ENCODE measurements at regions of chr12 and their contacts with region 1.

Region 1: DNA sequence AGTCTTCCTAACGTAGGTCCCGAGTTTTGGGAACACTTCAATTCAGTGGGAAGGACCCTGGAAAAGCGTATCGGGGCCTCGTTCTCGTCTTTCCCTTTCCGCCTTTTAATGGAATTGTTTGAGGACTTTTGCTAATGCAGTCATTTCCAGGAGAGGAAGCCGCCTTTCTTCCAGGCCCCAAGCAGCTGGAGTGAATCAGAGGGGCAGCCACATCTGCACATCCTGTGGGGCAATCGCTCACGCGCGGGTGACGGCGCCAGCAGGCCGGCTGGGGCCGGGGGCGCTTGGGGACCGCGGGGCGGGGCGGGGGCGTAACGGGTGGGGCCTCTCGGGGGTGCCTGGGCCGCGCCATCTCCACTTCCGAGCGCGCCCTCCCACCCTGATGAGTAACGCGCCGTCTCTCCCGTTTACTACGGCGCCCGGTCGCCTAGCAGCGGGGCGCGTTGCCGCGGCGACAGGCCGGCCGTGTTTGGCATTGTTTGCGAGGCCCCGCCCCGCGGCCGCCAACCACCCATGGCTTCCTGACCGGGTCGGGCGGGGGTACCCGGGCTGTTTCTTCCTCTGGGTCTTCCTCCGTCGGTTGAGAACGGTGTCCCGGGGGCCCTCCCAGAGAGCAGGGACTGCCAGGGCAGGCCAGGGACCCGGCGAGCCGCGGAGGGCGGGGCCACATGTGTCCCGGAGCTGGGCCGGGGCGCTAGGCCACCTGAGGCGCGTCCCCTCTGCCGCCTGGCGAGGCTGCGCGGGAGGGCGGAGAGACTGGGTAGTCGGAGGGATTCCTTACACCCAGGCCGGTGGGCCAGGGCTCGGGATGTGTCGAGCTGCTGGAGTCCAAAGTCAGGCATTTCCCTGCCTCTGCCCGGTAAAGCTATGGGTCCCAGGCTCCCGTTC is 2.3 kb downstream of the GSG1 start:
- DNase-seq: peak; percentile 98
- H3K4me3 Mint-ChIP-seq: peak overlapping the region; percentile 77
- H3K27ac Mint-ChIP-seq: peak overlapping the region; percentile 89
- H3K4me1 Mint-ChIP-seq: peaks cover 45% of the 10 kb centered on the region
- H3K27me3 Mint-ChIP-seq: peaks cover 3% of the 10 kb centered on the region

Region 2: GRCh38 chr12:11695321-11695720 is 1405.8 kb before region 1 on chr12:
- intact Hi-C with region 1: no loop called
- DNase-seq: no peak
- H3K4me3 Mint-ChIP-seq: no peak overlapping the region
- H3K27ac Mint-ChIP-seq: no peak overlapping the region
- H3K4me1 Mint-ChIP-seq: peaks cover 50% of the 10 kb centered on the region
- H3K27me3 Mint-ChIP-seq: no peaks in the 10 kb centered on the region

Region 3: DNA sequence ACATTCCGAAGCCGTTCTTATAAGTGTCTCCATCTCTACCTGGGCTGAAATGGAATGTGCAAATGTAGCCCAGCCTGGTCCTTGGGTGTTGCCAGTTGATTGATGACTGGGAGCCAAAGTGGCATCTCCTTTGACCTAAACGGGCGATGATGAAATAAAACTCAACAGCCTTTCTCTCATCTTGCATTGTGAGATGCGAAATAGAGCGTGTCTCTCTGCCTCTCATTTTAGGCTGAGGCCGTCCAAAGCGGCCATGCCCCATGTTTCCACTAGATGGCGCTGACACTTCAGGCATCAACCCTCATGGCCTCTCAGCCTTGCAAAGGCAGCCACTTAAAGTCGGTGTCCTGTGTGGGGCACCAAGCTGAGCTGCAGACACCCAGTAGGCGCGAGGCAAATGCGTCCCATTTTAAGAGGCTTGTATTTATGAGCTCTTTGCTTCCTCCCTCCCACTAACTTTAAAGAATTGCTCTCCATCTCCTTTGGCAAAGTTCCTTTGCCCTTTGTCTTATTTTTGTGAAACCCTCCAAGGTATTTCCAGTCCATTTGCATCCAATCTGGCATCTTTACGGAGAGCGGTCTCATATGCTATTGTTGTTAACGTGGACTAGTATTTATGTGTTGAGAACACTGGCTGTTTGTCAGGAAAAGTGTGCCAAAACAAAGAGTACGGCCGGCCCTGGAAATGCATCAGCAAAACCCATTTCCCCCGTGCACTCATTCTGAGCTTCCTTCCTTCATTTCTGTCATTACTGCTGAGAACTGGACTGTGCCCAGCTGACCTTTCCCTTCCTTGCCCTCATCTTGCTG is 184.8 kb before region 1 on chr12:
- intact Hi-C with region 1: loop called (anchors 1 kb)
- DNase-seq: peak; percentile 96
- H3K4me3 Mint-ChIP-seq: no peak overlapping the region
- H3K27ac Mint-ChIP-seq: no peak overlapping the region
- H3K4me1 Mint-ChIP-seq: peaks cover 3% of the 10 kb centered on the region
- H3K27me3 Mint-ChIP-seq: peaks cover 10% of the 10 kb centered on the region

Region 4: GRCh38 chr12:12975322-12976077 is 125.6 kb before region 1 on chr12:
- intact Hi-C with region 1: no loop called
- DNase-seq: no peak
- H3K4me3 Mint-ChIP-seq: no peak overlapping the region
- H3K27ac Mint-ChIP-seq: no peak overlapping the region
- H3K4me1 Mint-ChIP-seq: no peaks in the 10 kb centered on the region
- H3K27me3 Mint-ChIP-seq: no peaks in the 10 kb centered on the region

Region 5: DNA sequence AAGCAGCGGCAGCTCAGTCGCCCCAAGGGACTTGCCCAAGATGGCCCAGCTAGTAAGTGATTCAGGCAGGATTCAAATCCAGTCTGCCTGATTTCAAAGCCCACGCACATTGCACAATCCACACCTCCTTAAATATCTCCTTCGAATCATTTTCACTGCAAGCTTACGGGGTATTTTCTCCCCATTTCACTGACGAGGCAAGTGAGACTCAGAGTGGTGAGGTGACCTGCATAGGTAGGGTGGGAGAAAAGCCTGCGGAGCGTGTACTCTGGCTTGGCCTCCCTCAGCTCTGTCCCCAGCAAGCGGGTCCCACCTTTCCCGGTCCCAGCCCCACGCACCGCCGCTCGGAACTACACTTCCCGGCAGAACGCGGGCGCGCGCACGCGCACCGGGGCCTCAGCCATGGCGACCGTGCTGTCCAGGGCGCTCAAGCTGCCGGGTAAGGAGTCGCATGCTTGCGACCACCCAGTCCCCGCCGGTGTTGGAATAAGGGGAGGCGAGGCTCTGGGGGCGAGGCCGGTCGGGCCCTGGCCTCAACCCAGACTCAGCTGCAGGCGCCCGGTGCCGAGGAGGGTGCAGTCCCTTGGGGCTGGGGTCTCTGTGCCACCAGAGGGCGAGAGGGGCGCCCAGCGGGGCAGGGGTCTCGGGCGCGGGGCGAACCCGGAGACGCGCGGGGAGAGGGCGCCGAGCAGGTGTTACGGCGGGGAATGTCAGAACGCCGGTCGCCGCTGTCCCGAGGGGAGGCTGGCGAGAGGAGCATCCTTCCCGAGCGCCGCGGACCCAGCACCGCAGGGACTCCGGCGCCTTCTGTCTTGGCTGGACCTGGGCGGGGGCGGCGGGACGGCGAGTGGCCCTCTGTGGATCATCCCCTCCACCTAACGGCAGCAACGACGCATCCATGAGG is 56.9 kb before region 1 on chr12 and contains the start of gene FAM234B:
- intact Hi-C with region 1: loop called (anchors 5 kb)
- DNase-seq: peak; percentile 92
- H3K4me3 Mint-ChIP-seq: peak within 1 kb of the TSS; percentile 84
- H3K27ac Mint-ChIP-seq: peak within 1 kb of the TSS; percentile 75
- H3K4me1 Mint-ChIP-seq: peaks cover 19% of the 10 kb centered on the region
- H3K27me3 Mint-ChIP-seq: peaks cover 29% of the 10 kb centered on the region
- total RNA-seq, gene FAM234B: 8.6 and 9.0 TPM in 2 replicates

Region 6: DNA sequence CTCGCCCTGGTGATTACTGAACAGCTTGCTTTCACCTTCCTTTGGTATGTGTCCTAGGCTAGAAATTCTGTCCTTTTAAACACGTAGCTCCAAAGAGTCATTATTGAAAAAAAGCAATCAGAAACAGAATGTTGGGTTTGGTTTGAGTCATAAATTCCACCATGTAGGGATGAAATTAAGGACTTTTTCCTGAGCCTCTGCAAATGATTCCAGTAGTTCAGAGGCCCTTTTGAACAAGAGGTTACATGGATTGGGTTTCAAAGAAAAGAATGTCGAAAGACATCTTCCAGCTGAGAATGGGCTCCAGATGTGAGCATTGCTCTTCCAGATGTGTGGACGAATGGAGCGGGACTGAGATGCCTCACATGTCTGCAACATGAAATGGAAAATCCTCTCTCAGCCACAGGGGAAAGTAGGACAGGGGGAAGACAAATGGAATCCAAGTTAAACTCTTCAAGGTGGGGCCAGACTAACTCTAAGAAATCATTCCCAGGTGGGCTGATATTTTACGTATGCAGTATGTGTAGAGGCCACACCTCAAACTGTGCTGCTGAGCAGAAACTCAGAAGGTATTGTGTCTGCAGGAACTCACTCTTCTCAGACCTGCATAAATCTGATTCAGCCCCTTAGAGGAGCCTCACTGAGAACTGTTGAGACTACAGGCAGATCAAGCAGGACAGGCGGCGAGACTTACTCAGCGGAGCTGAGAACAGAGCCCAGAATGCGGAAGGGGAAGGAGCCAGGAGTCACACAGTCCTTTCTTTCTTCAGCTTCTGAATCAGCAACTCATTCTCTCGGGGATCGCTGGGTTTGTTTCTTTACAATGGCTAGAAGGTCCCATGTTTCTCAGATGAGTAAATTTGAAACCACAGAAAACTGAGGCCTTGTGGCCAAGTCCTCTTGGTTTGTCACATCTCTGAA is 72.1 kb after region 1 on chr12:
- intact Hi-C with region 1: no loop called
- DNase-seq: peak; percentile 69
- H3K4me3 Mint-ChIP-seq: no peak overlapping the region
- H3K27ac Mint-ChIP-seq: peak overlapping the region; percentile 52
- H3K4me1 Mint-ChIP-seq: peaks cover 13% of the 10 kb centered on the region
- H3K27me3 Mint-ChIP-seq: peaks cover 53% of the 10 kb centered on the region

Region 7: DNA sequence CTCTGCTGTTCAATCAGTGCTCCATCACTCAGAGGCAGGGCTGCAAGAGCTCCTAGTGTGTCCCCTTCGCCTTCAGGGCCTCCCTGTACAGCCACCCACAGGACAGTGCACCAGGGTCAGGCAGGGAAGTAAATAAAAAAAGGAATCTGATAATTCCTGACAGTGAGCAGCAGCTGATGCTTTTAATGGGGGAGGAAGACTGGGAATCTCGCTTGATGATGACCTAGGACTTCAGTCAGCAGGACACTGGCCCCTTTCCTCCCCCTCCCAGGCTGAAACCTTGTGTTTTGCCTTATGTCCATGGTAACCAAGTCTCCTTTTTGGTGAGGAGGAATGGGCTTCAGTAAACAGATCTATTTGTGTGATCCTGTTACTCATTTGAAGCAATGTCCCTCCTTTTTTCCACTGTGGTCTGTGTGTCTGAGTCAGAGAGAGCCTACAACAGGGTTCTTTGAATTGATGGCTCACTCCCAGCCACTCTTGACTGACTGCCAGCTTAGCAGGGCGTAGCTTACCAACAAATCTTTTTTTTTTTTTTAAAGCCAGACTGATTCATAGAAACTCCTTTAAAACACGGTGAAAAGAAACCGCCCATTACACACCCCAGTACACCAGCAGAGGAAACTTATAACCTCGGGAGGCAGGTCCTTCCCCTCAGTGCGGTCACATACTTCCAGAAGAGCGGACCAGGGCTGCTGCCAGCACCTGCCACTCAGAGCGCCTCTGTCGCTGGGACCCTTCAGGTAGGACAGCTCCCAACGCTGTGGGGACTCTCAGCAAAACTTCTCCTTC is 95.2 kb after region 1 on chr12 and contains the start of gene EMP1:
- intact Hi-C with region 1: loop called (anchors 1 kb)
- DNase-seq: peak; percentile 90
- H3K4me3 Mint-ChIP-seq: peak within 1 kb of the TSS; percentile 81
- H3K27ac Mint-ChIP-seq: peak within 1 kb of the TSS; percentile 86
- H3K4me1 Mint-ChIP-seq: peaks cover 27% of the 10 kb centered on the region
- H3K27me3 Mint-ChIP-seq: peaks cover 24% of the 10 kb centered on the region
- total RNA-seq, gene EMP1: 22.2 and 26.4 TPM in 2 replicates

Region 8: GRCh38 chr12:13211859-13212664 is 110.9 kb after region 1 on chr12:
- intact Hi-C with region 1: loop called (anchors 1 kb)
- DNase-seq: peak; percentile 92
- H3K4me3 Mint-ChIP-seq: peak overlapping the region; percentile 4
- H3K27ac Mint-ChIP-seq: peak overlapping the region; percentile 54
- H3K4me1 Mint-ChIP-seq: peaks cover 34% of the 10 kb centered on the region
- H3K27me3 Mint-ChIP-seq: no peaks in the 10 kb centered on the region

Region 9: GRCh38 chr12:14948672-14949071 is 1847.5 kb after region 1 on chr12:
- intact Hi-C with region 1: loop called (anchors 10 kb)
- DNase-seq: peak; percentile 89
- H3K4me3 Mint-ChIP-seq: peak overlapping the region; percentile 79
- H3K27ac Mint-ChIP-seq: peak overlapping the region; percentile 95
- H3K4me1 Mint-ChIP-seq: peaks cover 74% of the 10 kb centered on the region
- H3K27me3 Mint-ChIP-seq: no peaks in the 10 kb centered on the region

Measured in activated CD4-positive, alpha-beta T cell treated with anti-CD3 and anti-CD28 coated beads, Interleukin-2, amount 10 ng/mL, durations not matched to agents 24 days and 14 days (primary cell).